HAP-1 (cell line): ENCODE measurements at regions of chr18 and their contacts with region 1.

Region 1: DNA sequence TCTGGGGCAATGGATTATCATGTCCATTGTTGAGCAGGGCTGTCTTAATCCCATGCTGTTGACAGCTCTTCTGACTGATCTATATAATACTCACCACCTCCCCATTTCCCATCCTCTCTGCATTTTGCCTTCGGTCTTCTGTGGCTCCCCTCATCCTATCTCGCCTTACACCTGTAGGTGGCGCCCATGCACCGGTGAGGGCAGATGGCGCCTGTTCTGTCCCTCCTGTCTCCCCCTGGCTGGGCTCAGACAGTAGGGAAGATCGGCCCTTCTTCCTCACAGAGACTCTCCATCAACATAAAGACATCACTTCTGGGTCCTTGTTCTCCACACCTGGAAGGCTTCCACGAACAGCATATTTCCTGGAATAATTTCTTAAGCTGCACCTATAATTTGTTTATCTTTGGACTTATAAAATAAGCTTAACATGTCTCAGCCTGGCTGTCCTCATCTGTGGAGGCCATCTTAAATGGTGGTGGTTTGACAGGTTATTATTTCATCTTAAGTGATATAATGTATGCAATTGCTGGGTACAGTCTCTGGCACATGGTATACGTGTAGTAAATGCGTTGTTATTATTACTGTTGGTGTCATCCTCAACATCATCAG is 10.9 kb upstream of the CDH20 start:
- DNase-seq: peak; percentile 53 to 87
- H3K4me3 ChIP-seq: no peak overlapping the region
- H3K4me1 ChIP-seq: no peaks in the 10 kb centered on the region
- H3K27me3 ChIP-seq: 0 out of 2 replicates have a peak, but pooled peaks cover 2% of the 10 kb centered on the region

Region 2: DNA sequence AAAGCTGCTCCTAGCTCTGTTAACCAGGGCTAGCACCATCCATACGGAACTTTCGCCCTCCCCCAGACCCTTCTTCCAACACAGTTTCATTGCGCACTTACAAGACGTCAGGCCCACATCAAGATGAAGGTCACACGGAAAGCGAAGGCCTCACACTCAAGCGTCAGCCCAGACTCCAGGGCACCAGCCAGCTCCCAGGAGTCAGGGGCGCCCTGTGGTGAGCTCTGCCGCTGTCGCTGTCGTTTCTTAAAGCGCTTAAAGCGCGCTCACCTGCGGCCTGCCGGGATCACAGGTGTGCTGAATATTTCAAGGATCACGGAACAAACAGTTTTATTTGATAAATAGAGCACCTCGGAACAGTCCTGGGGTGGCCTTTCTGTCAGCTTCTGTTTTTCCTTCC is 174.0 kb after region 1 on chr18:
- in situ Hi-C with region 1: loop called (anchors 10 kb)
- DNase-seq: no peak
- H3K4me3 ChIP-seq: no peak overlapping the region
- H3K4me1 ChIP-seq: peaks cover under 1% of the 10 kb centered on the region; the same call in 1 of the 2 replicates
- H3K27me3 ChIP-seq: no peaks in the 10 kb centered on the region

Region 3: DNA sequence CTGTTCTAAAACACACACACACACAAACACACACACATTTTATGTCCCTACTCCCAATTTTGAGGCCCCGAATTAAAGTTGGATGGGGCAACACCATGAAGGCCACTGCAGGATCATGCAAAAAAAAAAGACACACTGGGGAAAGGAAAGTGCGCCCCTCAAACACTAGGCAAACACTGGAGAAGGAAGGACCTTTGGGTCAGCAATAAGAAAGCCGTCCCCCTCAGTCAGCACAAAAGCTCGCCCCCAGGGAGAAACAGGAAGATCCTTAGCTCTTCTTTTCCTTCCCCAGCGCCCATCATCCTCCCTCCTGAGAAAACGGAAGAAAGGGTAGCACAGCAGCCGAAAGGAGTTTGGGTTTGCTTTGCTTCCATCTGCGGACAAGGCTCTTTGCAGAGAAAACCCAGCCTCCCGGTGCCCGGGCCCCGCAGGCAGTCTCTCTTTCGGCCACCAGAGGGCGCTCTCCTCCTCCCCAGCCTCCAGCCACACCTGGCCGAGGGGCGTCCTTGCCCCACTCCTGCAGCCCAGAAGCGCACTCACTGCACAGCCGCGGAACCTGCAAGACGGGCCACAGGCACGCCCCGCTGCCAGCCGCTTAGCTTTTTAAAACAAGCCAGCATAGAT is 259.3 kb after region 1 on chr18:
- in situ Hi-C with region 1: no loop called
- DNase-seq: peak; percentile 60 to 89
- H3K4me3 ChIP-seq: peak overlapping the region; percentile 21
- H3K4me1 ChIP-seq: peaks cover 7% of the 10 kb centered on the region; the same call in 1 of the 2 replicates
- H3K27me3 ChIP-seq: no peaks in the 10 kb centered on the region